Activated T-helper 2 cell treated with anti-CD3 and anti-CD28 coated beads, Interferon-gamma antibody, Interleukin-2, Interleukin-4, amounts not matched to agents 10 μg/mL and 5 μg/mL and 100 μg/mL, durations not matched to agents 14 hours and 24 hours and 36 hours (primary cell): ENCODE measurements at regions of chr1 and their contacts with region 1.

Region 1: GRCh38 chr1:175481126-175482066 is 262.0 kb downstream of the TNR start:
- DNase-seq: no peak
- H3K4me3 Mint-ChIP-seq: no peak overlapping the region
- H3K27ac Mint-ChIP-seq: no peak overlapping the region
- H3K4me1 Mint-ChIP-seq: peaks cover 11% of the 10 kb centered on the region
- H3K27me3 Mint-ChIP-seq: peaks cover 58% of the 10 kb centered on the region

Region 2: GRCh38 chr1:175514387-175514953 is 33.1 kb after region 1 on chr1:
- intact Hi-C with region 1: loop called (anchors 1 kb)
- DNase-seq: no peak
- H3K4me3 Mint-ChIP-seq: no peak overlapping the region
- H3K27ac Mint-ChIP-seq: no peak overlapping the region
- H3K4me1 Mint-ChIP-seq: peaks cover 22% of the 10 kb centered on the region
- H3K27me3 Mint-ChIP-seq: peaks cover 34% of the 10 kb centered on the region

Region 3: DNA sequence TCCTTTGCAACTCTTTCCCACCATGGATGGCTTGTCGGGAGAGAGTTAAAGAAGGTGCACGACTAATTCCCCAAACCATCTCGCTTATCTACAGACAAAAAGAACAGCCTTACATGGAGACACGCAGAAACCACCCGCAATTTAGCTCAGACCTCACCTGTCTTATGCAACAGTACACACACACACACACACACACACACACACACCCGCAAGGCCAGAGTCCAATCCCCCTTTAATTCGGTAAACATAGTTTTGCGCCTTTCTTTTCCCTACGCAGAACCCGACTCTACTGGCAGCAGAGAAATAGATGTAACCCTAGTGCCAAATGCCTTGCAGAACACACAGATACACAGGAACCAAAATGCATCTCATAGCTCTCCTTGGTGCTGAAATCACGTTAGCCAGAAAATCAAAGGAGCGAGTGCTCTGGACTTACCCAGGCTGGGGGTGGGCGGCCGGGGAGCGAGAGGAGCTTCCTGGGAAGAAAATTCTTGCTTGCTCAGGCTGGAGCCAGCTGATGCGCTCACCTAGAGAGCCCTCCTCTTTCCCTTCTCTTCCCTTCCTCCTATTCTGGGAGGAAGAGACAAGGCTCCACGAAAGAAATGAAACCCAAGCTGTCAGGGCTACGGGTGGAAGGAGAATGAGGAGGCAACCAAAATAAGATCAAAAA is 261.5 kb after region 1 on chr1:
- intact Hi-C with region 1: loop called (anchors 5 kb)
- DNase-seq: no peak
- H3K4me3 Mint-ChIP-seq: no peak overlapping the region
- H3K27ac Mint-ChIP-seq: no peak overlapping the region
- H3K4me1 Mint-ChIP-seq: no peaks in the 10 kb centered on the region
- H3K27me3 Mint-ChIP-seq: peaks cover 12% of the 10 kb centered on the region

Region 4: GRCh38 chr1:176073524-176074157 is 592.2 kb after region 1 on chr1:
- intact Hi-C with region 1: loop called (anchors 5 kb)
- DNase-seq: no peak
- H3K4me3 Mint-ChIP-seq: no peak overlapping the region
- H3K27ac Mint-ChIP-seq: no peak overlapping the region
- H3K4me1 Mint-ChIP-seq: peaks cover under 1% of the 10 kb centered on the region
- H3K27me3 Mint-ChIP-seq: no peaks in the 10 kb centered on the region